Activated naive CD4-positive, alpha-beta T cell treated with anti-CD3 and anti-CD28 coated beads for 36 hours (primary cell): ENCODE measurements at regions of chr11 and their contacts with region 1.

Region 1: GRCh38 chr11:31240338-31240904 is 129.1 kb downstream of the DCDC1 start:
- DNase-seq: peak; percentile 33
- H3K4me3 Mint-ChIP-seq: no peak overlapping the region
- H3K27ac Mint-ChIP-seq: no peak overlapping the region
- H3K4me1 Mint-ChIP-seq: no peaks in the 10 kb centered on the region
- H3K27me3 Mint-ChIP-seq: peaks cover 4% of the 10 kb centered on the region

Region 2: GRCh38 chr11:30346068-30346688 is 894.2 kb before region 1 on chr11:
- CTCF ChIA-PET with region 1: no interaction called
- intact Hi-C with region 1: loop called (anchors 10 kb)
- DNase-seq: no peak
- H3K4me3 Mint-ChIP-seq: no peak overlapping the region
- H3K27ac Mint-ChIP-seq: no peak overlapping the region
- H3K4me1 Mint-ChIP-seq: peaks cover 11% of the 10 kb centered on the region
- H3K27me3 Mint-ChIP-seq: peaks cover 3% of the 10 kb centered on the region

Region 3: GRCh38 chr11:31069447-31070205 is 170.8 kb before region 1 on chr11:
- CTCF ChIA-PET with region 1: no interaction called
- intact Hi-C with region 1: no loop called
- DNase-seq: no peak
- H3K4me3 Mint-ChIP-seq: no peak overlapping the region
- H3K27ac Mint-ChIP-seq: no peak overlapping the region
- H3K4me1 Mint-ChIP-seq: no peaks in the 10 kb centered on the region
- H3K27me3 Mint-ChIP-seq: no peaks in the 10 kb centered on the region

Region 4: DNA sequence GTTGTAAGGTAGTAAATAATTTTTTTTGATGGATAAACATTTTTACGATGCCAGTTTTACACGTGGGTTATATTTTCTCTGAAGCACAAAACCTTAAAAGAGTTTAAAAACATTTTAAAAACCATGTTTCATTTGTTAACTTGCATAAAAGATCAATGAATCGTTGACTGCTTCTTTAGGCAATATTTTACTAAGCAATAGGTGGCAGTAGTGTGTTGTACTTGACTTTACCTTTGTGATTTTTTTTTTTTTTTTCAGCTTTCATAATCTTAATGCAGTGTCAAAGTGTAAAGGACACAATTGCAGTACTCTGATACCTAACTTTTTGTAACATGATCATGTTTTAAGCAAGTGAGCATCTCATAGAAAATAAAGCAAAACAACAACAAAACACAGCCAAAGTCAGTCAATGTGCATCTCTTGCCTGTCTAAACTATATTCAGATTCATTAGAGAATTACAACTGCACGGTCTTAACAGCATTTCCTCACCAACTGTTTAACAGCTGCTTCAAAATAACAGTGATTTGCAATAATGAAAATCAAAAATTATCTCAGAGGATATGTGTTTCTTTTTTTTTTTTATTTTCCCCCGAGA is 156.9 kb after region 1 on chr11:
- CTCF ChIA-PET with region 1: no interaction called
- intact Hi-C with region 1: loop called (anchors 10 kb)
- DNase-seq: no peak
- H3K4me3 Mint-ChIP-seq: no peak overlapping the region
- H3K27ac Mint-ChIP-seq: no peak overlapping the region
- H3K4me1 Mint-ChIP-seq: no peaks in the 10 kb centered on the region
- H3K27me3 Mint-ChIP-seq: no peaks in the 10 kb centered on the region

Region 5: DNA sequence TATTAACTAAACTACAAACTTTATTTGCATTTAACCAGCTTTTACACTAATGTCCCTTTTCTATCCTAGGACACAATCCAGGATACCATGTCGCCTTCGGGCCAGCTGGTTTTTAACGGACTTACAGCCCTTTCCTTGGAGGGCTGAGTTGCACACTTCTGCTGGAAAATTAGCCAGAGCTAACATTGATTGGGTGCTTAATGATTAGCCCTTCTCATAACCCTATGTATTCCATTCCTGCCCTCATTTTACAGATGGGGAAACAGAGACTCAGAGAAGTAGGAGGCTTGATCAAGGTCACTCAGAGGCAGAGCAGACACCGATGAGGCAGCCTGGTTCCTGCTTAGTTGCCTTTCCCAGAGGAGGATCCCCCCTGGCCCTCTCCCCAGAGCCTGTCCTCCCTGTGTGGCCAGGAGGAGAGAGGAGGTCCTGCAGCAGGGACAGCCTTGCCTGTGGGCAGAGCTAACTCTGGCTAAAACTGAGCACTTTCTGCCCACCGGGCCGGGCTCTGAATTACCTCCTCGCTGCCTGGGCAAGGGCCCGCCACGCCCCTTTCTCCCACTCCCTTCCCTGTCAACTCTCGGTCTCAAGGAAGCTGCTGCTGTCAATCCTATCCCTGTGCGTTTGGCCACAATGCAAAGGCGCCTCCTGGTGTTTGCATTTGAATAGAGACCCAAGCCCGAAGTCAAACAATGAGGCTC is 630.3 kb after region 1 on chr11:
- CTCF ChIA-PET with region 1: interaction called, 5 read pairs
- intact Hi-C with region 1: loop called (anchors 1 kb)
- DNase-seq: peak; percentile 51
- H3K4me3 Mint-ChIP-seq: no peak overlapping the region
- H3K27ac Mint-ChIP-seq: no peak overlapping the region
- H3K4me1 Mint-ChIP-seq: no peaks in the 10 kb centered on the region
- H3K27me3 Mint-ChIP-seq: peaks cover 30% of the 10 kb centered on the region

Region 6: DNA sequence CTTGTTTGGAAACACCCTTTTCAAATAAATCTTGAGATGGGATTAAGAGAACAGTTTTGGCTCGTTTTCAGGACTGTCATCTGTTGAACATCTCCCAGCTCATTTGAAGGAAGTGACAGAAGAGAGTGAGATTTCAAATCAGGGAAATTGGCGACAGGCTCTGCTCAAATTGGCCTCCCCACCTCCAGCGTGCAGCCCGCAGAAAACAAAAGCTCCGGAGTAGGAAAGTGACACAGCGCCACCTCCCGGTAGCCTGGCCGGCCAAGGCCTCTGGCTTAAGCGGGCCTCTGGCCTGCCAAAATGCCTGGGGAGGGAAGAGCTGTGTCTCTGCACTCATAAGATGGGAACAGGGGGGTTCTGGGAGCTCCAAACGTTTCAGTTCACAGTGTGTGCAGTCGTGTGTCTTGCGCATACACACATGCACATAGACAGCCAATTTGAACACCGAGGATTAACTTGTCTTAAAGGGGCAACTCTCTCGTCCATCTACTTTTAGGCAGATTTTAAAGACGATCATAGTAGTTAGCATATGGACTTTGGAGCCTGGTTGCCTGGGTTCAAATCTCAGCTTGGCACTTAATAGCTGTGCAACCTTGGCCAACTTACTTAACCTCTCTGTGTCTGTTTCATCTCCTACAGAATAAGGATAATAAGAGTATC is 717.8 kb after region 1 on chr11:
- CTCF ChIA-PET with region 1: interaction called, 11 read pairs
- intact Hi-C with region 1: loop called (anchors 1 kb)
- DNase-seq: peak; percentile 76
- H3K4me3 Mint-ChIP-seq: no peak overlapping the region
- H3K27ac Mint-ChIP-seq: no peak overlapping the region
- H3K4me1 Mint-ChIP-seq: no peaks in the 10 kb centered on the region
- H3K27me3 Mint-ChIP-seq: no peaks in the 10 kb centered on the region

Region 7: GRCh38 chr11:32006799-32007388 is 766.5 kb after region 1 on chr11:
- CTCF ChIA-PET with region 1: interaction called, 6 read pairs
- intact Hi-C with region 1: loop called (anchors 1 kb)
- DNase-seq: peak; percentile 31
- H3K4me3 Mint-ChIP-seq: no peak overlapping the region
- H3K27ac Mint-ChIP-seq: no peak overlapping the region
- H3K4me1 Mint-ChIP-seq: no peaks in the 10 kb centered on the region
- H3K27me3 Mint-ChIP-seq: peaks cover 20% of the 10 kb centered on the region

Region 8: GRCh38 chr11:32297611-32298011 is 1057.2 kb after region 1 on chr11:
- CTCF ChIA-PET with region 1: no interaction called
- intact Hi-C with region 1: loop called (anchors 2 kb)
- DNase-seq: no peak
- H3K4me3 Mint-ChIP-seq: no peak overlapping the region
- H3K27ac Mint-ChIP-seq: no peak overlapping the region
- H3K4me1 Mint-ChIP-seq: no peaks in the 10 kb centered on the region
- H3K27me3 Mint-ChIP-seq: no peaks in the 10 kb centered on the region